ENCODE measurements at regions of chr1 and their contacts with region 1.

Region 1: GRCh38 chr1:68232354-68233148 is at the start of gene WLS:
- DNase-seq: peak; percentile 79 to 83
- ATAC-seq: peak; percentile 87 to 91 (median 90)
- H3K4me3 ChIP-seq: peak within 1 kb of the TSS; percentile 70 to 91 (median 82)
- H3K27ac ChIP-seq: peak within 1 kb of the TSS; percentile 41 to 89 (median 87)
- H3K4me1 ChIP-seq: peaks cover 0 to 39% (median 27%) of the 10 kb centered on the region in 9 donors
- H3K27me3 ChIP-seq: peaks cover 0 to 12% (median 0%) of the 10 kb centered on the region in 7 donors
- CTCF ChIP-seq: peak in 5 of 9 donors; percentile 7 to 36 (median 25)
- total RNA-seq, gene WLS: 82.3 to 123 (median 109) TPM

Region 2: DNA sequence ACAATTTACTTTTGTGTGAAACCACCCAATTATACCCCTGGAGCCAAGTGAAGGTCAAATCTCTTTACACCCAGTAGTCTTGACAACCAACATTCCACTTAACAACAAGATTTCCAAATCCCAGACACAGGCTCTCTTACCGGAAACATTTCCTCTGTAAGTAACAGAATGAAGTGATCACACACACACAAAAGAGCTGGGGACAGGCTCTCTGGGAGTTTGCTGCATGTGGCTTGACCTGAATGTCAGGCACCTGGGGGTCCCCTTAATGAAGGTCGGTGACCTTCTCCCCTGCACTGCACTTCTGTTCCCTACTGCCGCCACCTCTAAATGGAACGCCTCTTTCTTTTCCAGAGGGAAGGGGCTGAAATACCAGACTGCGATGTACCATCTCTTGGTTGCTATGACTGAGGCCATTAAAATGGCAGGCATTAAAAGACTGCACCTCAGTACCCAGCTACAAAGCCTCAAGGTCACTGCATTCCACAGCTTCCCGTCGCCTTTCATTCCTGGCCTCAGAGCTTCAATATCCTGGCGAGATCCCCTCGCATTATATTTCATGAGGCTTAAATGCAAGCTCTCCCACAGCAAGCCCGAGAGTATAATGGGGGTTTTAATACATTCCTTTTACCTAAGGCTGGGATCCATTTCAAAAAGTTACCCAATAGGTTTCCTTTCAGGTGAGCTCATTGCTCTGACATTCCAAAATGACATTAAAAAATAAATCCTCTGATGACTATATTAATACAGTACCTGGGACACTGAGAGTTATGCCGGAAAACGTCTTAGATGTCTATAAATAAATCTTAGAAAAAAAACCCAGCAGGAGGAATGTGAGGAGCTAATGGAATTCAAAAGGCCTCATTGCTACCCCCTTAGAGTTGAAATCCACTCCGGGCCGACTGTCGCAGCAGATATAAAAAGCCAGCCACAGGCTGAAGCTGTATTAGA is 91.2 kb before region 1 on chr1:
- intact Hi-C with region 1: loop called in 5 of 10 experiments (anchors 5 to 10 kb)
- DNase-seq: no peak
- ATAC-seq: peak; percentile 31 to 53 (median 47)
- H3K4me3 ChIP-seq: no peak overlapping the region
- H3K27ac ChIP-seq: peak overlapping the region in 9 of 10 donors; percentile 10 to 65 (median 41)
- H3K4me1 ChIP-seq: peaks cover 5 to 30% (median 15%) of the 10 kb centered on the region in 9 donors
- H3K27me3 ChIP-seq: no peaks in the 10 kb centered on the region
- CTCF ChIP-seq: no peak

Region 3: GRCh38 chr1:68173911-68174737 is 58.4 kb before region 1 on chr1:
- intact Hi-C with region 1: loop called in 3 of 10 experiments (anchors 2 to 5 kb)
- DNase-seq: peak; percentile 23 to 78
- ATAC-seq: peak; percentile 62 to 81 (median 76)
- H3K4me3 ChIP-seq: peak overlapping the region in 6 of 10 donors; percentile 0 to 8 (median 4)
- H3K27ac ChIP-seq: peak overlapping the region; percentile 25 to 88 (median 73)
- H3K4me1 ChIP-seq: peaks cover 12 to 75% (median 55%) of the 10 kb centered on the region in 9 donors
- H3K27me3 ChIP-seq: no peaks in the 10 kb centered on the region
- CTCF ChIP-seq: no peak

Region 4: DNA sequence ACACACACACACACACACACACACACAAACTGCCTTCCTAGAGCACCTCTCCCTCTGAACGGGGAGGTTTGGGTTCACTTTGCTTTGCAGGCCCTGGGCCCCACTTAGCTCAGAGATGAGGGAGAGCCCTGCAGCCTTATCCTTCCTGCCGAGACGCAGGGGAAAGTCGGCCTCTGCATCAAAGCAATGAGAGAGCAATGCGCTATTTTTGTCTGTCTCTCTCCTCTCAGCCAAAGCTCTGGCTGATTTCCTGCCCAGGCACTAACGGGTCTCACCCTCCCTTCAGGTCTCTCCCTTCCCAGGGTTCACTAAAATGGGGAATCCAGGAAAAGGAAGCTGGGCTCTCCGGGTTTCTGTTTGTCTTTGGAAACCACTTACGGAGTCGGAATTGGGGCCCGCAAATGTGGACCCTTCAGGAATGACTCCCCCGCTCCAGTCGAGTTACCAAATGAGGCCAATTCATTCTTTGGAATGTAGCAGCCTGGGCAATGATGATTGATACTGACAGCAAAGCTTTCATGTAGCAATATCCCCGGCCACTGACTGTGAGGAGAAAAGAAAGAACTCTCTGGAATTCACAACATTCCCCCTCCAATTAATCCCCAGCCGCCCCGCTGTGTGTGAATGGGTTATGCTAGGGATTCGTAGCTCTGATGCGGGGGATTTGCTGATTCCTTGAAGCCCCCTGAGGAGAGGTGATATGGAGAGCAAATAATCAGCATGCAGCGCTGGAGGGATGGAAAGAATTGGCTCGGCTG is 61.2 kb after region 1 on chr1:
- intact Hi-C with region 1: loop called in 1 of 10 experiments (anchors 10 kb)
- DNase-seq: peak in 1 of 2 donors; percentile 57
- ATAC-seq: peak; percentile 57 to 93 (median 88)
- H3K4me3 ChIP-seq: peak overlapping the region in 1 of 10 donors; percentile 3
- H3K27ac ChIP-seq: peak overlapping the region in 4 of 10 donors; percentile 46 to 56 (median 54)
- H3K4me1 ChIP-seq: peaks cover 10 to 30% (median 24%) of the 10 kb centered on the region in 9 donors
- H3K27me3 ChIP-seq: no peaks in the 10 kb centered on the region
- CTCF ChIP-seq: no peak

Region 5: GRCh38 chr1:68321084-68321685 is 88.6 kb after region 1 on chr1:
- intact Hi-C with region 1: loop called in 5 of 10 experiments (anchors 5 to 10 kb)
- DNase-seq: peak; percentile 53 to 64
- ATAC-seq: peak; percentile 87 to 94 (median 91)
- H3K4me3 ChIP-seq: no peak overlapping the region
- H3K27ac ChIP-seq: no peak overlapping the region
- H3K4me1 ChIP-seq: peaks cover 0 to 14% (median 0%) of the 10 kb centered on the region in 9 donors
- H3K27me3 ChIP-seq: no peaks in the 10 kb centered on the region
- CTCF ChIP-seq: peak; percentile 26 to 84 (median 77)